Transverse colon (tissue), 4 donors: ENCODE measurements at regions of chrX and their contacts with region 1.

Region 1: GRCh38 chrX:111886678-111887077 is 10.7 kb downstream of the TRPC5OS start:
- DNase-seq: no peak
- H3K4me3 ChIP-seq: no peak overlapping the region
- H3K27ac ChIP-seq: no peak overlapping the region
- H3K4me1 ChIP-seq: no peaks in the 10 kb centered on the region
- H3K27me3 ChIP-seq: no peaks in the 10 kb centered on the region
- CTCF ChIP-seq: no peak
- EP300 ChIP-seq: no peak
- POLR2A ChIP-seq: no peak

Region 2: GRCh38 chrX:110588164-110588563 is 1298.5 kb before region 1 on chrX:
- in situ Hi-C with region 1: no loop called
- intact Hi-C with region 1: no loop called
- DNase-seq: no peak
- H3K4me3 ChIP-seq: no peak overlapping the region
- H3K27ac ChIP-seq: no peak overlapping the region
- H3K4me1 ChIP-seq: no peaks in the 10 kb centered on the region
- H3K27me3 ChIP-seq: no peaks in the 10 kb centered on the region
- CTCF ChIP-seq: no peak
- EP300 ChIP-seq: no peak
- POLR2A ChIP-seq: no peak

Region 3: GRCh38 chrX:112179361-112179760 is 292.7 kb after region 1 on chrX:
- in situ Hi-C with region 1: no loop called
- intact Hi-C with region 1: no loop called
- DNase-seq: no peak
- H3K4me3 ChIP-seq: no peak overlapping the region
- H3K27ac ChIP-seq: no peak overlapping the region
- H3K4me1 ChIP-seq: no peaks in the 10 kb centered on the region
- H3K27me3 ChIP-seq: no peaks in the 10 kb centered on the region
- CTCF ChIP-seq: no peak
- EP300 ChIP-seq: no peak
- POLR2A ChIP-seq: no peak

Region 4: DNA sequence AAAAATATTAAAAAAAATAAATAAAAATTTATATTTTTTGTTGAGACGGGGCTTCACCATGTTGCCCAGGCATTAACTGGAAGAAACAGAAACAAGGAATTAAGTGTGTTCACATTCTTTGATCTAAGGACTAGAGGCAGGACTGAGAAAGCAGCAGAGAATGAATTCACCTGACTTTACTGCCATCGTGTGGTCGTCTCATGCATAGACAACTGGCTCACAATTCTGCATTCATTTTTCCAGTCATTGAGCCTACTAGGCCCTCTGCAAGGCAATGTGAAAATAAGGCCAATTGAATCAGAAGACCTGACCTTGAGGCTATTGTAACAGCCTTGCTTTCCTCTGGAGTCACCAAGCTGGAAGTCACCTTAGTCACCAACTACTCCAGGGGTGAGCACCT is 755.7 kb after region 1 on chrX:
- in situ Hi-C with region 1: loop called in 1 of 4 experiments (anchors 25 kb)
- intact Hi-C with region 1: no loop called
- DNase-seq: peak; percentile 9
- H3K4me3 ChIP-seq: no peak overlapping the region
- H3K27ac ChIP-seq: no peak overlapping the region
- H3K4me1 ChIP-seq: no peaks in the 10 kb centered on the region
- H3K27me3 ChIP-seq: no peaks in the 10 kb centered on the region
- CTCF ChIP-seq: peak; percentile 30 to 67 (median 44)
- EP300 ChIP-seq: no peak
- POLR2A ChIP-seq: no peak